PC-3 (cell line): ENCODE measurements at regions of chr12 and their contacts with region 1.

Region 1: GRCh38 chr12:123942238-123942653 is 30.4 kb downstream of the CCDC92 start:
- DNase-seq: peak; percentile 90
- ATAC-seq: peak; percentile 91
- H3K4me3 ChIP-seq: peak overlapping the region; percentile 25; the same call in 1 of the 2 replicates
- H3K27ac ChIP-seq: peak overlapping the region; percentile 71
- H3K4me1 ChIP-seq: peaks cover 25% of the 10 kb centered on the region
- H3K27me3 ChIP-seq: no peaks in the 10 kb centered on the region
- CTCF ChIP-seq: no peak

Region 2: DNA sequence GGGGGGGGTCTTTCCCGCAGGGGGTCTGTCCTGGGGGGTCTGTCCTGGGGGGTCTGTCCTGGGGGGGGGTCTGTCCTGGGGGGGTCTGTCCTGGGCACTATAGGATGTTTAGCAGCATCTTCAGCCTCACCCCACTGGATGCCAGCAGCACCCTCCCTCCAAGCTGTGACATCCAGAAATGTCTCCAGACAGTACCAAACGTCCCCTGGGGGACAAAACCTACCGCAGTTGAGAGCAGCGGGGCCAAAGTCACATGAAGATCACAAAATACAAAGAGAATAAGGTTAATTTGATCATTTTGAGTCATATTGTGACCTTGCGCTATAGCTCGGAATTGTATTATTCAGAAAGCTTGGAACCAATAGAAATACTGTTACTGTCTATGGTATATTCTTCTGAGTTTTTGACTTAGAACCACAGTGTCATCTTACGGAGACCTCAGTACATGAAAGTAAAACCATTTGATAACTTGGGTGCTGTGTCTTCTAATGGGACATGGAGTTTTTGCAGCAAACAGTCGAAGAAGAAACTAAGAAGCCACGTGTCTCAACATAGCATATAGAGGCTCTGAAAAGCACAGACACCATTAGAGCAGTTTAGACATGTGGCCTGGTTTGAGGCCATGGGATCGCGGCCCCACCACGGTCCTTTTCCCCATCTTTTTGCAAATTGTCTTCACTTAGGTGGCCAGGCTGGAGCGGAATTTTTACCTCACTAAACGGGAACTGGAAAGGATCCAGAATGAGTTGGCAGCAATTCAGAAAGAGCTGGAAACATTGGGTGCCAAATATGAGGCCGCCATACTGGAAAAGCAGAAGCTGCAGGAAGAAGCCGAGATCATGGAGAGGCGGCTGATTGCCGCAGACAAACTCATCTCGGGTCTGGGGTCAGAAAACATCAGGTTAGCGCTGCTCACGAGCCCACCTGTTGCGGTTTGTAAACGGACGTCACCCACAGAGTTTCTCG is 29.5 kb before region 1 on chr12:
- CTCF ChIA-PET with region 1: no interaction called
- POLR2A ChIA-PET with region 1: no interaction called
- intact Hi-C with region 1: loop called (anchors 2 kb)
- DNase-seq: no peak
- ATAC-seq: peak; percentile 18
- H3K4me3 ChIP-seq: no peak overlapping the region
- H3K27ac ChIP-seq: no peak overlapping the region
- H3K4me1 ChIP-seq: no peaks in the 10 kb centered on the region
- H3K27me3 ChIP-seq: no peaks in the 10 kb centered on the region
- CTCF ChIP-seq: no peak

Region 3: GRCh38 chr12:123931686-123932321 is 10.4 kb before region 1 on chr12:
- CTCF ChIA-PET with region 1: interaction called, 10 read pairs
- POLR2A ChIA-PET with region 1: no interaction called
- intact Hi-C with region 1: no loop called
- DNase-seq: no peak
- ATAC-seq: no peak
- H3K4me3 ChIP-seq: no peak overlapping the region
- H3K27ac ChIP-seq: no peak overlapping the region
- H3K4me1 ChIP-seq: no peaks in the 10 kb centered on the region
- H3K27me3 ChIP-seq: no peaks in the 10 kb centered on the region
- CTCF ChIP-seq: no peak

Region 4: DNA sequence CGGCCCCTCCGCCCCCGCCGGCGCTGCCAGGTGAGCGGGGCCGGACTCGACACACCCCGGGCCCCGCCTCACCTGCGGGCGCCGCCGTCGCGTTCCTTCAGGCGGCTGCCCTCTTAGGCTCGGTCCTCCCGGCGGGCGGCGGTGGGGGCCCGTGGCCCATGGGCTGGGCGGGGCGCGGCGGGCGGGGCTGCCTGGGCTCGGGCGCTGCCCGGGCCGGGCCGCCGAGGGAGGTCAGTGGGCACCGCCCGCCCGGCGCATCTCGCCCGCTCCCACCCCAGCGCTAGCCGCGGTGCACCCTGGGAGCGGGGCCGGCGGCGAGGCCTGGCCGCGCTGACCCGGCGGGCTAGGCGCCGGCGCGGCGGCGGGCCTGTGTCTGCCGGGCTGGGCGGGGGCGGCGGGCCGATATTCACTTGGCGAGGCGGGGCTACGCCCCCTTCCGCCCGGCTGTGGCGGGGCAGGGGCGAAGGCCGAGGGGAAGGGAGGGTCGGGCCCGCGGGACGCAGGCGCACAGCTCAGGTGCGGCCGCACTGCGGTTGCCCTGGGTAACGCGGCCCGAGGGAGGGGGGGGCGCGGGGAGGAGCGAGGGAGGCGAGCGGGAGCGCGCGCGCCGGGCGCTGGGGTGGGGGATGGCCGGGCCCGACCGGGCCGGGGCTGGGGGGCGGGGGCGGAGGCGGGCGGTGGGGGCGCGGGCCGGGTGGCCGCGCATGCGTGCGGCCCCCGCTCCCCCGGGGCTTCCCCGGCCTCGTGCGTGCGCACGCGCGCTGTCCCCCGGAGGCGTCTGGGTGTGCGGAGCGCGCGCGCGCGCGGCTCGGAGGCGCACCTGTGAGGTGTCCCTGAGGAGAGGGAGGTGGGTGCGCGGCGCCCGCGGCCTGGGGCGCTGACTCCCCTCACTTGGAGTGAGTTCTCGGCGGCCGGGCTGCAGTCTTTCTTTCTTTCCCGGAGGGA is 30.5 kb after region 1 on chr12 and contains the starts of genes CCDC92 and ZNF664:
- CTCF ChIA-PET with region 1: no interaction called
- POLR2A ChIA-PET with region 1: interaction called, 3 read pairs
- intact Hi-C with region 1: loop called (anchors 1 kb)
- DNase-seq: peak; percentile 96
- ATAC-seq: peak; percentile 74
- H3K4me3 ChIP-seq: peak within 1 kb of the TSS; percentile 85
- H3K27ac ChIP-seq: peak within 1 kb of the TSS; percentile 4
- H3K4me1 ChIP-seq: peaks cover 44% of the 10 kb centered on the region
- H3K27me3 ChIP-seq: no peaks in the 10 kb centered on the region
- CTCF ChIP-seq: no peak
- total RNA-seq, gene CCDC92: 9.6 and 9.7 TPM in 2 replicates
- total RNA-seq, gene ZNF664: 80.8 and 86.9 TPM in 2 replicates

Region 5: GRCh38 chr12:123983822-123984485 is 41.7 kb after region 1 on chr12:
- CTCF ChIA-PET with region 1: no interaction called
- POLR2A ChIA-PET with region 1: no interaction called
- intact Hi-C with region 1: loop called (anchors 5 kb)
- DNase-seq: peak; percentile 84
- ATAC-seq: peak; percentile 93
- H3K4me3 ChIP-seq: no peak overlapping the region
- H3K27ac ChIP-seq: no peak overlapping the region
- H3K4me1 ChIP-seq: no peaks in the 10 kb centered on the region
- H3K27me3 ChIP-seq: no peaks in the 10 kb centered on the region
- CTCF ChIP-seq: peak; percentile 96